PC-3 (cell line): ENCODE measurements at regions of chr16 and their contacts with region 1.

Region 1: DNA sequence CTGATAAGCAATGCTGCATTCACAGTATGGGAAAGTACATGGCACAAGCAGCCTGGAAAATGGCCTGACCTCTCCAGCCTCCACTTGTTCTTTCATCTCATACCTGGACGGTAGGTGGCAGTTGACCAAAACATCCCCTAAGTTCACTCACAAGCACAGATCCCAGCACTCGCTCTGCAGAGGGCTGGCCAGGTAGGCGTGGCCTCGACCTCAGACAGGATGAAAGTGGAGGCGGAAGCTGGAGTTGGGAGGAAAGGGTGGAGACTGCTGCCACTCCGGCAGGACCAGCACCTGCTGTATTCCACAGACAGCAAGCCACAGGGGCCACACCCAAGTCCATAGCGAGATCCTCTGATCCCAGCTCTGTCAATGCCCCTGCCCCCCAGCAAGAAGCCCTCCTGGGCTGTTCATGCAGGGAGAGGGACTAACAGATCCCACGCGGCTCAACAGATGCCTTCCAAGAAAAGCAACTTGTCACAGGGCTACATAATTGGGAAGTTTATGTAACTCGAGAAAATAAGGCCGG is 31.3 kb downstream of the ZCCHC14 start:
- DNase-seq: peak; percentile 95
- ATAC-seq: peak; percentile 73
- H3K4me3 ChIP-seq: peak overlapping the region; percentile 53
- H3K27ac ChIP-seq: 0 out of 2 replicates have a peak overlapping the region, but pooled peaks have one; percentile 37
- H3K4me1 ChIP-seq: peaks cover 52% of the 10 kb centered on the region
- H3K27me3 ChIP-seq: no peaks in the 10 kb centered on the region
- CTCF ChIP-seq: peak; percentile 64

Region 2: DNA sequence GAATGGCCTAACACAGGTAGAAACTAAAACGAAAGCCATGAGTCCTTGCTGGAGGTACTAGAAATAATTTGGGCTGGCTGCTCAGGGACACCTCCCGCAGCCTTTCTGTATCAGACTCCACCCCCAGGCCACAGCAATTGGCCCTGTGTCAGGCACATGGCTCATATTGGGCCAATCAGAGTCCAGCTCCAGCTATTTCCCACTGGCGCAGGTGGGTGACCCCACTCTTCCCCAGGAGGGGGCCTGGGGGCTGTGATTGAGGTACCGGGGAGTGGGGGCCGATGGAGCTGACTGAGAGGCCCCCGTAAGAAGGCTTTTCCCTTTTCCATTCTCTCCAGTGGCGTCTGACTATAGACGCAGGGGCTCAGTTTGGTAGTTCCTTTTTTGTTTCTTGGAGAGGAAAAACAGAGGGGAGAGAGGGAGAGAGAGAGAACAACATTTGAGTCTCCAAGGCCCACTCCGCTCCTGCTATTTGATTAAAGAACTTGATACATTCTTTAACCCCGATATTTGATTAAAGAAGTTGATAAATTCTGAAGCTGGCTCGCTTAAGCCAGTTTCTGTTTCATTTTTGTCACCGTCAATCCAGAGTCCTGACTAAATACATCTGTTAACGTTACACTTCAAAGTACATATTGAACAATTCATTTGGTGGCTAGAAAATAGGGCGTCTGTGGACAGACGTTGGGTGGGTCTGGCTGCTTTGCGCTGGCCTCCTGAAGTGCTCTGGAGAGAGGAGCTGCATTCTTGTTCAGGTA is 856.9 kb before region 1 on chr16:
- CTCF ChIA-PET with region 1: no interaction called
- POLR2A ChIA-PET with region 1: interaction called, 26 read pairs
- intact Hi-C with region 1: no loop called
- DNase-seq: no peak
- ATAC-seq: no peak
- H3K4me3 ChIP-seq: no peak overlapping the region
- H3K27ac ChIP-seq: no peak overlapping the region
- H3K4me1 ChIP-seq: no peaks in the 10 kb centered on the region
- H3K27me3 ChIP-seq: no peaks in the 10 kb centered on the region
- CTCF ChIP-seq: no peak

Region 3: DNA sequence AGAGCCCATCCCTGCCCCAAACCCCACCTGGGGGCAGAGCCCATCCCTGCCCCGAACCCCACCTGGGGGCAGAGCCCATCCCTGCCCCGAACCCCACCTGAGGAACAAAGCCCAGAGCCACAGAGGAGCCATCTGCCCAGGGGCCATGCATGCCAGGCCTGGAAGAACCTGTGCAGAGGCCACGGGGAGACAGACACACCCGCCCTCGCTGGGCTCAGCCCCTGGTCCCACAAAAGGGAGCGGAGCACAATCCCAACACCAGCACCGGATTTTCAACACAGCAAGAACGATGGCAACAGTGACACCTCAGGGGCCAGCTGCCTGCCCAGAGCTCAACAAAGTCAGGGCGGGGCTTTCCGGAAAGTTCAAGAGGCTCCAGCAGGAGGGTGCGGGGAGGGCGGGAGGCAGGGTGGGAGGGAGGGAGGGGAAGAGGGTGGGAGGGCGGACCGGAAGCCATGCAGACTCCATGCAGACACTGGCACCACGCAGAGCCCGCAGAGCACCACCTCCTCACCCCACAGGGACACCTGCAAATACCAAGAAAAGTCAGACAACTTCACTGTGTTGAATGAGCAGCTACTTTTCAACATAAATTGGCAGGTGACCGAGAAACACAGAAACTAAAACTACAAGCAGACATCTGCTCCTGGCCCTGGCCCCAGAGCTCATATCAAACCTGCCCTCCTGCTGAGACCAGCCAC is 116.4 kb before region 1 on chr16:
- CTCF ChIA-PET with region 1: no interaction called
- POLR2A ChIA-PET with region 1: no interaction called
- intact Hi-C with region 1: no loop called
- DNase-seq: no peak
- ATAC-seq: no peak
- H3K4me3 ChIP-seq: no peak overlapping the region
- H3K27ac ChIP-seq: no peak overlapping the region
- H3K4me1 ChIP-seq: no peaks in the 10 kb centered on the region
- H3K27me3 ChIP-seq: no peaks in the 10 kb centered on the region
- CTCF ChIP-seq: no peak

Region 4: DNA sequence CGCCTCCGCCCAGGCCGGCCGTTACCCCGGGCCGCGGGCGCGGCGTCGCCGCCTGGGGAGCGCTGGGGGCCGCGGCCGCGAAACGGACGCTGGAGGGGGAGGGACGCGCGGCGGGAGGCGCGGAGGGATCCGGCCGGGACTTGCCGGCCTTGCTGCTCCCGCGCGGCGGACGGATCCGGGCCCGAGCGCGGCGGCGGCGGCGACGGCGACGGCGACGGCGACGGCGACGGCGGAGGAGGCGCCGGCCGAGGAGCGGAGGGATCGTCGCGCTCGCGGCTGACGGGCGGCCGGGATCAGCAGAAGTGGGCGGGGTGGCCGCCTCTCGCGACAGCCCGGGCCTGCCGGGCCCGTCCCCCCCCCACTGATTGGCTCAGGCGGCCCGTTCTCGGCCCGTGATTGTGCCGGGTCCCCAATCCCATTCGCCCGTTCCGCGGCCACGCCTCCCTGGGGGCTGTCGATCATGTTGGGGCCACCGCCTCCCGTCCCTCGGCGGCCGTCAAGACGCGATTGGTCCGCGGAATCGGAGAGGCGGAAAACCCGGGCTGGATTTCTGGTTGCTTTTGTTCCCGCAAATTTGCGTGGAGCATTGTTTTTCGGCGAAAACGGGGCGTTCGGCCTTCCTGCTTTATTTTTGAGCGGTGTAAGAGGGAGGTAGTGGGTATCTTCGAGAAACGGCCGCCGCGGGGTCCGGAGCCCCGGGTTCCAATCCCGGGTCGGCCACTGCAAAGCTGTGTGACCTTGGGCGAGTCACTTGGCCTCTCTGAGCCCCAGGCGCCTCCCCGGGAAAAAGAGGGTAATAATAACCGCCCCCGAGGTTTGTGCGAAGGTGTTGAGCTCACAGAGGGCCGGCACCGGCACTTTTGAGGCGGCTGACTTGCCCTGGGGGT is 31.4 kb after region 1 on chr16 and contains the start of gene ZCCHC14:
- CTCF ChIA-PET with region 1: interaction called, 3 read pairs
- POLR2A ChIA-PET with region 1: no interaction called
- intact Hi-C with region 1: loop called (anchors 2 kb)
- DNase-seq: peak; percentile 93
- ATAC-seq: peak; percentile 93
- H3K4me3 ChIP-seq: peak within 1 kb of the TSS; percentile 73
- H3K27ac ChIP-seq: no peak within 1 kb of the TSS
- H3K4me1 ChIP-seq: no peaks in the 10 kb centered on the region
- H3K27me3 ChIP-seq: no peaks in the 10 kb centered on the region
- CTCF ChIP-seq: no peak
- total RNA-seq, gene ZCCHC14: 5.3 and 11.5 TPM in 2 replicates

Region 5: GRCh38 chr16:87582204-87582965 is 120.9 kb after region 1 on chr16:
- CTCF ChIA-PET with region 1: no interaction called
- POLR2A ChIA-PET with region 1: interaction called, 12 read pairs
- intact Hi-C with region 1: no loop called
- DNase-seq: no peak
- ATAC-seq: peak; percentile 45
- H3K4me3 ChIP-seq: no peak overlapping the region
- H3K27ac ChIP-seq: peak overlapping the region; percentile 61
- H3K4me1 ChIP-seq: peaks cover 32% of the 10 kb centered on the region
- H3K27me3 ChIP-seq: no peaks in the 10 kb centered on the region
- CTCF ChIP-seq: no peak

Region 6: DNA sequence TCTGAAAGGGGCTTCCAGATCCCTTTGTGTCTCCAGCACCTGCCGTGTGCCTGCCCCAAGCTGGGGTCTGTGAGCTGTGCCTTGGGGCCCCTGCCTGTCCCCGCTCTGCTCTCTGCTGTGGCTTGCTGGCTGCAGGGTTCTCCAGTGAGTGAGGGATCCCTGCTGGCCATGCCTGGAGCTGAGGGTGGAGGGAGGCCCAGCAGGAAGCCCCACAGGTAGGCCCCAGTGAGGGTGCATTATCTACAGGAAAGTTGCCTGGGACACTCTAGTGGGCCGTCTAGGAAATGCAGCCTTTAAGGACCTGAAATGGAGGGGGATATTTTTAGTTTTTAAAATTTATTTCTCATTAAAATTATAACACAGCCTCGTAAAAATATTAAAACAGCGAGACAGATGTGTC is 191.7 kb after region 1 on chr16:
- CTCF ChIA-PET with region 1: no interaction called
- POLR2A ChIA-PET with region 1: no interaction called
- intact Hi-C with region 1: no loop called
- DNase-seq: peak; percentile 20
- ATAC-seq: peak; percentile 45
- H3K4me3 ChIP-seq: no peak overlapping the region
- H3K27ac ChIP-seq: no peak overlapping the region
- H3K4me1 ChIP-seq: no peaks in the 10 kb centered on the region
- H3K27me3 ChIP-seq: peaks cover 23% of the 10 kb centered on the region
- CTCF ChIP-seq: peak; percentile 54